Sigmoid colon (tissue), 7 donors: ENCODE measurements at regions of chr12 and their contacts with region 1.

Region 1: DNA sequence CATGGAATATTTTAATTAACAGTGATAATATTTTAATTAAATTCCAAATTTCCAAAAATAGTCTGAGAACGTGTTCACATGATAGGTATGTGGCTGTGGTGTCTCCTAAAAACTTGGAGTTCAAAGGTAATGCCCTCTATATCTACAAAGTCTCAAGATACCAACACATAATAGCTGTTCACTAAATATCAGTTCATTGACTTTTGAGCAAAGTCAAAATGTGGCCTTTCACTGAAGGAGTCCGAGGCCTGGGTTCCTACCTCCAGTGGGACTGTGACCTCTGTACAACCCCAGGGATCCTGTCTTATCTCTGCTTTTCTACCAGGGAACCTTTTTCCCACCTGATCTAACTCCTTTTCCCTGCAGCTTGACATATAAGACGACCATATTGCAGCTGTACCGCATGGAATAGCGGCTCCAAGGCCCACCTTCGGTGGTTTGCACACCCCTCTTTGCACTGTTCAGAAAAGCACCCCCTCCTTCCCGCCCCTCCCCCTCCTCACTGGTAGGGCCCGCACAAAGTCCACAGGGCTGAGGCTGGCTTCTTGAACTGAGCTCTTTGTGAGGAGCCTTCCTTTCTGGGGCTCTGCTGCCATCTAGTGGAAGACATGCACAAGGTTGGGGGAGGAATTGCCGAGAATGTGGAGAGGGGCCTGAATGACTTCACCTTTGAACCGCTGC is 3.1 kb downstream of the CCND2 start:
- DNase-seq: peak; percentile 95
- H3K4me3 ChIP-seq: peak overlapping the region in 3 of 4 donors; percentile 67 to 91 (median 82)
- H3K27ac ChIP-seq: peak overlapping the region; percentile 93 to 99 (median 95)
- H3K4me1 ChIP-seq: peaks cover 0 to 74% (median 70%) of the 10 kb centered on the region in 4 donors
- H3K27me3 ChIP-seq: no peaks in the 10 kb centered on the region
- CTCF ChIP-seq: peak; percentile 93 to 96 (median 96)
- EP300 ChIP-seq: no peak
- POLR2A ChIP-seq: no peak

Region 2: GRCh38 chr12:3872800-3873636 is 403.6 kb before region 1 on chr12 and contains the start of gene PARP11:
- intact Hi-C with region 1: loop called (anchors 2 kb)
- DNase-seq: peak; percentile 99
- H3K4me3 ChIP-seq: peak within 1 kb of the TSS; percentile 58 to 71 (median 68)
- H3K27ac ChIP-seq: peak within 1 kb of the TSS; percentile 87 to 92 (median 91)
- H3K4me1 ChIP-seq: peaks cover 0 to 29% (median 19%) of the 10 kb centered on the region in 4 donors
- H3K27me3 ChIP-seq: no peaks in the 10 kb centered on the region
- CTCF ChIP-seq: no peak
- EP300 ChIP-seq: no peak
- POLR2A ChIP-seq: peak; percentile 21 to 37
- total RNA-seq, gene PARP11: 5.8 to 12.1 (median 8.8) TPM

Region 3: GRCh38 chr12:3995306-3995705 is 281.4 kb before region 1 on chr12:
- intact Hi-C with region 1: loop called (anchors 2 kb)
- DNase-seq: no peak
- H3K4me3 ChIP-seq: no peak overlapping the region
- H3K27ac ChIP-seq: no peak overlapping the region
- H3K4me1 ChIP-seq: no peaks in the 10 kb centered on the region
- H3K27me3 ChIP-seq: peaks cover 0 to 4% (median 0%) of the 10 kb centered on the region in 3 donors
- CTCF ChIP-seq: no peak
- EP300 ChIP-seq: no peak
- POLR2A ChIP-seq: no peak

Region 4: GRCh38 chr12:4107436-4107878 is 169.2 kb before region 1 on chr12:
- intact Hi-C with region 1: loop called (anchors 1 kb)
- DNase-seq: no peak
- H3K4me3 ChIP-seq: no peak overlapping the region
- H3K27ac ChIP-seq: no peak overlapping the region
- H3K4me1 ChIP-seq: no peaks in the 10 kb centered on the region
- H3K27me3 ChIP-seq: peaks cover 0 to 4% (median 0%) of the 10 kb centered on the region in 3 donors
- CTCF ChIP-seq: peak in 3 of 4 experiments; percentile 36 to 61 (median 59)
- EP300 ChIP-seq: no peak
- POLR2A ChIP-seq: no peak

Region 5: DNA sequence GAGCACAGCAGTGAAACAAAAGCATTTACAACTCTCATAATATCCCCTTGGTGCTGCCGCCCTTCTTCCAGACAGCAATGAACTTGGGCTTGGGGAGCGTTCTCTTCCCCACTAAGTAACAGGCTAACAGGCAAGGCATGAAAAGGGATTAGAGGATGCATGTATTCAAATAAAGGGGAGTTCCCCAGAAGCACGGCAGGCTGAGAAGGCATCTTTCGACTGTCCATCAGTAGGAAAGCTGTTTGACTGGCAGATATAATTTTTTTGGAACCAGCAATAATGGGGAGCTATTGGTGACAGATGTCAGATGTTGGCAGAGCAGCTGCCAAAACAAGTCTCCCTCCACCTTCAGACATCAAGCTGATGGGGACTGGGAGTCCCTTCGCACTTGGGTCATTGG is 35.1 kb after region 1 on chr12:
- intact Hi-C with region 1: no loop called
- DNase-seq: no peak
- H3K4me3 ChIP-seq: no peak overlapping the region
- H3K27ac ChIP-seq: no peak overlapping the region
- H3K4me1 ChIP-seq: peaks cover 0 to 20% (median 15%) of the 10 kb centered on the region in 4 donors
- H3K27me3 ChIP-seq: no peaks in the 10 kb centered on the region
- CTCF ChIP-seq: no peak
- EP300 ChIP-seq: no peak
- POLR2A ChIP-seq: no peak